Activated CD4-positive, alpha-beta T cell treated with anti-CD3 and anti-CD28 coated beads, Interleukin-2, amount 10 ng/mL, durations not matched to agents 24 days and 14 days (primary cell): ENCODE measurements at regions of chr10 and their contacts with region 1.

Region 1: DNA sequence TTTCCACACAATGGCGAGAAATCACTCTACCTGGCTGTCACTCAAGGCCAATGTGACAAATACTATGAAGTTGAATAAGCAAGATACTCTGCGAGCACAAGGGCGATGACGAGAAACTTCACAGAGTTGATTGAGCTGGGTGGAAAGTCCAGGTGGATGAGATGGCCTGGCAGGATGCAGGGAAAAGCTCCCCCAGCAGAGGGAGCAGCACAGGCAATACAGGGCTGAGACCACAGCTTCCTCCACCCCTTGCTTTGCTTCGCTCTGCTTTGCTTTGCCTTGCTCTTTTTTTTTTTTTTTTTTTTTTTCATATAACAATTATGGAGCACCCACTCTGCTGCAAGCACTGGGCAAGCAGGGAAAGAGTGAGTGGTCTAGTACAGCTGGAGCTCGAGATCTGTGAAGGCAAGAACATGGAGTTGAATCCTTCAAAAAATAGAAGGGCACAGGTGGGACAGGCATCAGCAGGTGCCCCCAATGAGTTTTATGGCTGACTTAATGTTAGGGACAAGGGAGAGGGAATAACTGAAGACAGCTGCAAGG is 88.3 kb downstream of the CABCOCO1 start:
- DNase-seq: peak; percentile 89
- H3K4me3 Mint-ChIP-seq: peak overlapping the region; percentile 50
- H3K27ac Mint-ChIP-seq: peak overlapping the region; percentile 30
- H3K4me1 Mint-ChIP-seq: peaks cover 25% of the 10 kb centered on the region
- H3K27me3 Mint-ChIP-seq: peaks cover 2% of the 10 kb centered on the region

Region 2: GRCh38 chr10:60314069-60314940 is 1436.7 kb before region 1 on chr10:
- intact Hi-C with region 1: no loop called
- DNase-seq: no peak
- H3K4me3 Mint-ChIP-seq: no peak overlapping the region
- H3K27ac Mint-ChIP-seq: no peak overlapping the region
- H3K4me1 Mint-ChIP-seq: peaks cover 19% of the 10 kb centered on the region
- H3K27me3 Mint-ChIP-seq: no peaks in the 10 kb centered on the region

Region 3: GRCh38 chr10:61565819-61566560 is 185.0 kb before region 1 on chr10:
- intact Hi-C with region 1: no loop called
- DNase-seq: no peak
- H3K4me3 Mint-ChIP-seq: no peak overlapping the region
- H3K27ac Mint-ChIP-seq: no peak overlapping the region
- H3K4me1 Mint-ChIP-seq: no peaks in the 10 kb centered on the region
- H3K27me3 Mint-ChIP-seq: no peaks in the 10 kb centered on the region

Region 4: DNA sequence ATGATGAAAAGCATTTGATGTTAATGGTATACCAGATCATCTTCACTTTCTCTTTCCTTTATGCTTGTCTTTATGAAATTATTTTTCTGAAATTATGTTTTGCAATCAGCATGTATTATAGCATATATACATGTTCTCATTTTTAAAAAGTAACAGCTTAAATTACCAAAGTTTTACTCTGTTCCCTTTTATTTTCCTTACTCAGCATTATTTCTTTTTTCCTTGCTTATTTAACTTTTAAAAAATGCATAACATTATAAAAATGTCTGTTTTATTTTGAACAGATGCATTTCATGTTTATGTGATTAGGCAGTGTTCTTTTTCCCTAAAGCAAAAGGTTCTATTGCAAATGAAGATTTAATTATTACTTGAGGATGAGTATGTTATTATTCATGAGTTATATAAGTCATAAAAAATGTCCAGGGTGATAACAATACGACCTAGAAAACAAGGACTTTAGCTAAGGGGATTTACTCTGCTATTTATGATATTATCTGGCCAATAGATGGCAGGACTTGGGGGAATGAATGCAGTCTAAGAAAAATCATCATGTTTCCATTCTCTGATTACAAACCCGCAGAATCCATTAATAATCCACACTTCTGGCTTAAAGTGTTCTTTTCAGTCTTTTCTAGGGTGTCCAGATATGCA is 49.8 kb before region 1 on chr10:
- intact Hi-C with region 1: no loop called
- DNase-seq: no peak
- H3K4me3 Mint-ChIP-seq: no peak overlapping the region
- H3K27ac Mint-ChIP-seq: no peak overlapping the region
- H3K4me1 Mint-ChIP-seq: no peaks in the 10 kb centered on the region
- H3K27me3 Mint-ChIP-seq: peaks cover 5% of the 10 kb centered on the region

Region 5: DNA sequence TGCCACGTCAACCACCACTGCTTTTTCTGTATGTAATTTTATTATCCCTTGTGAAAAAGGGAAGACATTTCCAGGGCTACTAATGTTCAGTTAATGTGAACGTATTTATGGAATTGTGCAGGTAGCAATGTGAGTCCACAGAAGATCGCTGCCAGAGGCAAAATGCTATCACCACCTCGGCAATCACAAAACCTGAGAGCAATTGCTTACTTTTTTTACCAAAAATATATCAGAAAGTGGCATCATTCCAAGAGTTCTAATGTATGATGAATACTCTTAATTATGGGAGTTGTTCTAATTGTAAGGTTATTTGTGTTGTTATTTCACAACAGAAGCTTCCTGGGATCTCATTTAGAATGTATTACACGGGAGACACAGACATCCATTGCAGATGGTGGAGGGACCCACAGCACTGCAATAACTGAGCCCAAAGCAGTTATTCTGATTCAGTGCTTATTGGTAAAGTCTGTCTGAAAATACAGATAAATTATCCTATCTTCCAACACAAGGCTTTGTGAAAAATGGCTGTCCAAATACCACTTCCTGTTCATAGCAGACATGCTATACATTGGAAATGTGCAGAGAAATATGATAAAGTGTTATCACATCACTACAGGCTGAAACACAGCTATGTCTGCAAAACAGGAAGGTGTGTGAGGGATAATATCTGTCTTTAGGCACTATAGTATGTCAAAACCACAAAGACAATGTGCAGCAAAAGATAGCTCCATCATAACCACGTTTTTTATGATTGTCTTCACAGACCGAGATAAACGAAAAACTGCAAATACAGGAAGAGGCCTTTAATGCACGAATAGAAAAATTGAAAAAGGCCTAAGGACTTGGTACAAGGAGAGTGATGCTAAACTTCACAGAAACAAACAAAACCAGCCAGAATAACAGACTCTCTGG is 14.4 kb after region 1 on chr10:
- intact Hi-C with region 1: loop called (anchors 2 kb)
- DNase-seq: peak; percentile 64
- H3K4me3 Mint-ChIP-seq: peak overlapping the region; percentile 50
- H3K27ac Mint-ChIP-seq: peak overlapping the region; percentile 76
- H3K4me1 Mint-ChIP-seq: peaks cover 21% of the 10 kb centered on the region
- H3K27me3 Mint-ChIP-seq: peaks cover 1% of the 10 kb centered on the region

Region 6: GRCh38 chr10:61786728-61787127 is 35.7 kb after region 1 on chr10:
- intact Hi-C with region 1: loop called (anchors 2 kb)
- DNase-seq: peak; percentile 69
- H3K4me3 Mint-ChIP-seq: no peak overlapping the region
- H3K27ac Mint-ChIP-seq: no peak overlapping the region
- H3K4me1 Mint-ChIP-seq: peaks cover 49% of the 10 kb centered on the region
- H3K27me3 Mint-ChIP-seq: no peaks in the 10 kb centered on the region

Region 7: GRCh38 chr10:61835069-61835945 is 84.3 kb after region 1 on chr10:
- intact Hi-C with region 1: loop called (anchors 1 kb)
- DNase-seq: peak; percentile 73
- H3K4me3 Mint-ChIP-seq: no peak overlapping the region
- H3K27ac Mint-ChIP-seq: no peak overlapping the region
- H3K4me1 Mint-ChIP-seq: peaks cover 7% of the 10 kb centered on the region
- H3K27me3 Mint-ChIP-seq: no peaks in the 10 kb centered on the region

Region 8: GRCh38 chr10:61882621-61883373 is 131.8 kb after region 1 on chr10:
- intact Hi-C with region 1: loop called (anchors 5 kb)
- DNase-seq: no peak
- H3K4me3 Mint-ChIP-seq: peak overlapping the region; percentile 32
- H3K27ac Mint-ChIP-seq: peak overlapping the region; percentile 79
- H3K4me1 Mint-ChIP-seq: peaks cover 16% of the 10 kb centered on the region
- H3K27me3 Mint-ChIP-seq: peaks cover 2% of the 10 kb centered on the region

Region 9: DNA sequence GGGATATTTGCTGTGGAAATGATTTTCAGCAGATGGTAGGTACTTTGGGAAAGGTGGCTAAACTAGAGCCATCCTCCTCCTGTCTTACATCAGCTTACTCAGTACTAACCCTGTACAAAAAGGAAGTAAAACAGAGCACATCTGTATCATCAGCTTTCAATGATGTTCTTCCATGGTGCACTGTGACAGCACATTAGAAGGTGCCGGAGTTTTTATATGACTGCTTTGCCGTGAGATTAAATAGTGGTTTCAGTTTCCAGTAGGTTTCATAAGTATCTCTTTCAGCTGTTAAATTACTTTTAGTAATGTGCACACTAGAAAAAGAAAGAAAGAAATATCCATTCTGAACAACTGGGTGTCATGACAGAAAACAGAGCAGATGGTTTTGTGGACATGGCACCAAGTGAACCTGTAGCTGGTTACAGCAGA is 237.0 kb after region 1 on chr10:
- intact Hi-C with region 1: loop called (anchors 5 kb)
- DNase-seq: peak; percentile 84
- H3K4me3 Mint-ChIP-seq: peak overlapping the region; percentile 72
- H3K27ac Mint-ChIP-seq: peak overlapping the region; percentile 96
- H3K4me1 Mint-ChIP-seq: peaks cover 71% of the 10 kb centered on the region
- H3K27me3 Mint-ChIP-seq: no peaks in the 10 kb centered on the region

Region 10: GRCh38 chr10:62250594-62251198 is 499.7 kb after region 1 on chr10:
- intact Hi-C with region 1: loop called (anchors 5 kb)
- DNase-seq: no peak
- H3K4me3 Mint-ChIP-seq: no peak overlapping the region
- H3K27ac Mint-ChIP-seq: no peak overlapping the region
- H3K4me1 Mint-ChIP-seq: peaks cover 24% of the 10 kb centered on the region
- H3K27me3 Mint-ChIP-seq: no peaks in the 10 kb centered on the region